ENCODE measurements at regions of chr16 and their contacts with region 1.

Region 1: DNA sequence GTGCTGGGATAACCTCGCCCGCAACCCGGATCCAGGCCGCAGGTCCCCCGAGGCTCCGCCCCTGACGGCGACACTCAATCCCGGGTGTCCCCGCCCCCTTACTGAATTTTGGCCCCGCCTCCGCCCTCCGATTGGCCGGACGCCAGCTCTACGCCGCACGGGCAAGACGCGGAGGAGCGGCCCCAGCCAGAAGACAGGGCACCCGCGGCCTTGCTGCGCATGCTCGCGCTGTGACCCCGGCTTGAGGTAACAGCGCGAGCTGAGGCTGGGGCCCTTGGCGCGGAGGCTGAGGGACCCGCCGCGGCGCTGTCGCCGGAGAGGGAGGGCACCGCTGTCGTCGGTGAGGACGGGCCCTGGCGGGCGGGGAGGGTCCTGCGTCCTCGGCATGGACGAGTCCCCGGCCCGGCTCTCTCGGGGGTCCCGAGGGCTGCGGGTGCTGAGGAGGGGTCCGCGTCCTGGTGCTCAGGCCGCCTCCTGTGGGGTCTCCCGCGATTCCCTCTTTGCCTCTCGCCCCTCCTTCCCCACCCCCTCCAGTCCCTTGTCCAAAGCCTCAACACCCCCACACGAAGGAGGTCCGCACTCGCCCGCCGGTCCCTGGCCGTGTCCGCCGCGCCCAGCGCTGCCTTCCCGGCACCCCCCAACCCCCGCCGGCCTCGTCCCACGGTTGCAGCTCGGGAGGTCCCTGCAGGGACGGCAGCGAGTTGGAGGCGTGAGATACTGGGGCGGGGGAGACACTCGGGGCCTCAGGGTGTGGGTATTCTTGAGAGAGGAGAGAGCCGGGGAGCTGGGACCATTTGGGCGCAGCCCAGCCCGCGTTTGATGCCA is at the start of gene FLYWCH2:
- DNase-seq: peak; percentile 97
- H3K4me3 ChIP-seq: peak within 1 kb of the TSS; percentile 84
- H3K27ac ChIP-seq: peak within 1 kb of the TSS; percentile 52
- H3K4me1 ChIP-seq: peaks cover 7% of the 10 kb centered on the region
- CTCF ChIP-seq: no peak
- total RNA-seq, gene FLYWCH2: 38.7 and 44.9 TPM in 2 replicates

Region 2: GRCh38 chr16:2816751-2817339 is 66.4 kb before region 1 on chr16 and contains the start of gene PRSS21:
- CTCF ChIA-PET with region 1: no interaction called
- POLR2A ChIA-PET with region 1: no interaction called
- intact Hi-C with region 1: no loop called
- DNase-seq: peak; percentile 68
- H3K4me3 ChIP-seq: peak within 1 kb of the TSS; percentile 86
- H3K27ac ChIP-seq: peak within 1 kb of the TSS; percentile 54
- H3K4me1 ChIP-seq: peaks cover 18% of the 10 kb centered on the region
- CTCF ChIP-seq: peak; percentile 72
- total RNA-seq, gene PRSS21: 44.5 and 68.7 TPM in 2 replicates

Region 3: GRCh38 chr16:2905431-2906387 is 22.5 kb after region 1 on chr16:
- CTCF ChIA-PET with region 1: no interaction called
- POLR2A ChIA-PET with region 1: interaction called, 6 read pairs
- intact Hi-C with region 1: loop called (anchors 1 kb)
- DNase-seq: peak; percentile 99
- H3K4me3 ChIP-seq: peak overlapping the region; percentile 77
- H3K27ac ChIP-seq: peak overlapping the region; percentile 51
- H3K4me1 ChIP-seq: peaks cover 15% of the 10 kb centered on the region
- CTCF ChIP-seq: no peak

Measured in OCI-LY7 (cell line).